Heart left ventricle (tissue), 16 donors: ENCODE measurements at regions of chr5 and their contacts with region 1.

Region 1: DNA sequence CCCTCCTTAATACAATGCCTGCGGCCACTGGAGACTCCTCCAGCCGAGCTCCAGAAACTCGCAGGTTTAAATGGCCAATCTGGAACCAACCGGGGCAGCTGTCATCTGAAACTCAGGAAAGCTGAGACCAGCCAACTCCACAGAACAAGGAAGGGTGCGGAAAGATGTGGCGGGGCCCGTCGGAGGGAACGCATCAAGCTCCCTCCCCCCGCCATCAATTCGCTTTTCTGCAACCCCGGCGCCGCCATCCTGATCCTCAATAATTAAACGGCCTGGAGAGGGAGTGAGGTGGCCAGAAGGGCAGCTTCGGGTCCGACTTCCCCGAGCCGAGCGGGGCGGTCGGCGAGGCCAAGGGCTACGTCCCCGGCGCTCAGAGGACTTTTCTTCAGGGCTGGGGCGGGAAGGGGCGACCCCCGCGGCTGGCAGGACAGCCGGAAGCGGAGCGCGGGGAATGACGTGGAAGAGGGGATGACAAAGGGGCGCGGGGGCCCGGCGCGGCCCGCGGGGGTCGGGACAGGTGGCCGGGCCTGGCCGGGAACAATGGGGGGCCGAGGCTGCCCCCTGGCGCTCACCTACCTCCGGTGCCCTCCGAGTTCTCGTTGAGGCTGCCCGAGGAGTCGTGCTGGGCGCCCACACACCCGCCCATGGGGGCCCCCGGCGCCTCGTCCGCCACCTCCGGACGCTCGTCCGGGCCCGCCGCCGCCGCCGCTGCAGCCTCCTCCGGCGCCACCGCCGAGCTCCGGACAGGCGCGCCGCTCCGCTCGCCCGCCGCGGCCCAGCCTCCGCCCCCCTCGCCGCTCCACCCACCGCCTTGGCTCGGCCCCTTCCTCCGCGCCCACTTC is at the start of gene UBTD2:
- DNase-seq: peak; percentile 89 to 93 (median 90)
- ATAC-seq: peak; percentile 69 to 94 (median 88)
- H3K4me3 ChIP-seq: peak within 1 kb of the TSS; percentile 58 to 98 (median 90)
- H3K27ac ChIP-seq: peak within 1 kb of the TSS; percentile 85 to 96 (median 92)
- H3K4me1 ChIP-seq: peaks cover 0 to 39% (median 25%) of the 10 kb centered on the region in 12 donors
- H3K27me3 ChIP-seq: no peaks in the 10 kb centered on the region
- CTCF ChIP-seq: peak; percentile 39 to 75 (median 62)
- POLR2A ChIP-seq: peak in 1 of 2 donors; percentile 40
- total RNA-seq, gene UBTD2: 9.1 to 13.3 (median 9.7) TPM

Region 2: GRCh38 chr5:172454358-172455086 is 171.3 kb after region 1 on chr5 and contains the start of gene SH3PXD2B:
- intact Hi-C with region 1: loop called in 2 of 10 experiments (anchors 5 to 10 kb)
- DNase-seq: peak; percentile 74 to 84 (median 77)
- ATAC-seq: peak; percentile 15 to 67 (median 49)
- H3K4me3 ChIP-seq: peak within 1 kb of the TSS; percentile 63 to 98 (median 84)
- H3K27ac ChIP-seq: peak within 1 kb of the TSS; percentile 60 to 88 (median 74)
- H3K4me1 ChIP-seq: peaks cover 0 to 60% (median 34%) of the 10 kb centered on the region in 12 donors
- H3K27me3 ChIP-seq: no peaks in the 10 kb centered on the region
- CTCF ChIP-seq: no peak
- POLR2A ChIP-seq: peak in 1 of 2 donors; percentile 49
- total RNA-seq, gene SH3PXD2B: 3.3 to 22.7 (median 8.4) TPM

Region 3: DNA sequence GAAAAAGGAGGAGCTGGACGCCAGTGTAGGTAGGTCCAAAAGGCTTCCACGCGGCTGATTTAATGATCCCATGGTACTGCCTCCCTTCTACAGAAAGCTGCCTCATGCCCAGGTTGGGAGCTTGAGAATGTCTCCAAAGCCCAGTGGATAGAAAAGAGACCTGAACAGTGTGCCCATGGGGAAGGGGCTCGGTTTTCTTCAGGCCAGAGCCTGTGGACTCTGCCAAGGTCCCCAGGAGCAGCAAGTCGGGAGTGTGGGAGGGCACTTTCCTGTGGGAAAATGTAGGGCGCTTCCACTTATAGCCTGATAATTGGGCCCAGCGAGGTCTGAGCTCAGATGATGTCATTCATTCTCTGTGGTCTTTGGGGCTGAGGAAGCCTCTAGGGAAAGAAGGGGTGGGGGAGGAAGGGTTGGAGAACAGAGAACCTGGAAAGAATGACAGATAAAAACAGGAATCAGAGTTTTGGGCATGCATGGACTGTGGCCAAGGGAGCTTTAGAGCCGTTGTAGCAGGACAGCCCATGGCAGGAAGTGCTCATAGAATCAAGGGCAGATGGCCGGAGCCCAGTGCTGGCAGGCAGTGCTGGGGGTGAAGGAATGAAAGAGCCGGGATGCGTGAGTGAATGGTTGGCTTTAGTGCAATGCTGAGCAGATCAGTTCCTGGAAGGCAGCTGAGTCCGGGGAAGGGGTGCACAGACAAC is 213.6 kb after region 1 on chr5:
- intact Hi-C with region 1: no loop called
- DNase-seq: peak; percentile 54 to 84 (median 75)
- ATAC-seq: peak; percentile 53 to 86 (median 78)
- H3K4me3 ChIP-seq: no peak overlapping the region
- H3K27ac ChIP-seq: peak overlapping the region in 11 of 12 donors; percentile 17 to 89 (median 71)
- H3K4me1 ChIP-seq: peaks cover 0 to 38% (median 16%) of the 10 kb centered on the region in 12 donors
- H3K27me3 ChIP-seq: no peaks in the 10 kb centered on the region
- CTCF ChIP-seq: no peak
- POLR2A ChIP-seq: no peak